Heart left ventricle (tissue), 16 donors: ENCODE measurements at regions of chr4 and their contacts with region 1.

Region 1: DNA sequence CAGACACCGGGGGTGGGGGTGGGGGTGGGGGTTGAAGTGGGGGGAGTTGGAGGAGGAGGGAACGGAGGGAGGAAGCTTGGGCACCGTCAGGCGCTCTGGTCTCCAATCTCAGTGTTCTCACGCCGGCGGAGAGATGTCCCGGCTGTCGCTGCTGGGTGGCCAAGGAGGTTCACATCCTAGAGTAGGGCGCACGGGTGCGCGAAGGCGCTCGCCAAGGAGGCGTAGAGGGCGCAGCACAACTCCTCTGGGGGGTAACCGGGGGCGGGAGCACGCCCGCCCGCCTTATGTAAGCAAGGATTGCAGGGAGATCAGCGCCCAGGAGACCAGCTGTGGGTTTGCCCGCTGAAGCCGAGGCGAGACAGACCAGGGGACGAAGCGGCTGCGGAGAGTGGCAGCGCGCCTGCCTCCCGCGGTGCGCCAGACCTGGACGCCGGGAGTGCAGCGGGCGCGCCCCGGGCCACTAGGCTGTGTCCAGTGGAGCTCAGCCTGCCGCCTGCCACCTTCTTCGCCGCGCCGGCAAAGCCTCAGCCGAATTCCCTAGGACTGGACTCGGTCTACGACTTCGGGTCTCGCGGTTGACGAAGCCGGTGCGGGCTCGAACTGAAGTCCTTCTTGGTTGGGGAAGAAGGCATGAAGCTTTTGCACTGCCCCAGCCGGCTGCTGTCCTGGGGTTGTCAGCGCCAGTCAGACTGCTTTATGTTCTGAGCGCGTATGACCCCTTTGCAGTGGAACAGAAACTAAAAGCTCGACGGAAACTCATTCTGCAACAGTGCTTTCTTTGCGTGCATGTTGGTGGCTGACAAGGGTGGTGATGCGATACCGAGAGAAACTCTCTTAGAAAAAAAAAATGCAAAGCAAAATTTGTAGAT is 707 bp upstream of the UNC5C start:
- DNase-seq: peak; percentile 59 to 80 (median 68)
- ATAC-seq: peak; percentile 50 to 79 (median 63)
- H3K4me3 ChIP-seq: peak overlapping the region; percentile 46 to 78 (median 68)
- H3K27ac ChIP-seq: peak overlapping the region; percentile 69 to 90 (median 84)
- H3K4me1 ChIP-seq: peaks cover 0 to 24% (median 0%) of the 10 kb centered on the region in 12 donors
- H3K27me3 ChIP-seq: peaks cover 3 to 49% (median 18%) of the 10 kb centered on the region in 9 donors
- CTCF ChIP-seq: no peak
- POLR2A ChIP-seq: no peak

Region 2: GRCh38 chr4:95377366-95377900 is 172.0 kb before region 1 on chr4:
- intact Hi-C with region 1: no loop called
- DNase-seq: no peak
- ATAC-seq: no peak
- H3K4me3 ChIP-seq: no peak overlapping the region
- H3K27ac ChIP-seq: no peak overlapping the region
- H3K4me1 ChIP-seq: no peaks in the 10 kb centered on the region
- H3K27me3 ChIP-seq: no peaks in the 10 kb centered on the region
- CTCF ChIP-seq: no peak
- POLR2A ChIP-seq: no peak

Region 3: DNA sequence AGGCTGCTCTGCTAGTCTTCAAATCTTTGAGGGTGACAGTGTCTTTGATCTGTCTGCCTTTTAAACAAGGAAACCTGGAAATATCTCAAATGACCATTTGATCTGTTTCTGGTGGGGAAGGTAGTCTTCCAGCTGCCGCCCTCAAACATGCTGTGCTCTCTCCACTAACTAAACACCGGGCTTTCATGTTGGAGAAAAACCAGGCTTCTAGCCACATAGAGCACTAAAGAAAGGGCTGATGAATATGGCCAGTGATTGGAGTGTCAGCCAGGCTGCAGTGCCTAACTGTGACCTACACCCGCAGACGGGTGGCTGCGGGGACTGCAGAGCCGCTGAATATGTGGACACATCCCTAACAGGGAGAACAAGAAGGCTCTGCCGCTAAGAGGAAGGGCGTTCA is 86.6 kb before region 1 on chr4:
- intact Hi-C with region 1: no loop called
- DNase-seq: no peak
- ATAC-seq: no peak
- H3K4me3 ChIP-seq: no peak overlapping the region
- H3K27ac ChIP-seq: no peak overlapping the region
- H3K4me1 ChIP-seq: no peaks in the 10 kb centered on the region
- H3K27me3 ChIP-seq: no peaks in the 10 kb centered on the region
- CTCF ChIP-seq: no peak
- POLR2A ChIP-seq: no peak

Region 4: DNA sequence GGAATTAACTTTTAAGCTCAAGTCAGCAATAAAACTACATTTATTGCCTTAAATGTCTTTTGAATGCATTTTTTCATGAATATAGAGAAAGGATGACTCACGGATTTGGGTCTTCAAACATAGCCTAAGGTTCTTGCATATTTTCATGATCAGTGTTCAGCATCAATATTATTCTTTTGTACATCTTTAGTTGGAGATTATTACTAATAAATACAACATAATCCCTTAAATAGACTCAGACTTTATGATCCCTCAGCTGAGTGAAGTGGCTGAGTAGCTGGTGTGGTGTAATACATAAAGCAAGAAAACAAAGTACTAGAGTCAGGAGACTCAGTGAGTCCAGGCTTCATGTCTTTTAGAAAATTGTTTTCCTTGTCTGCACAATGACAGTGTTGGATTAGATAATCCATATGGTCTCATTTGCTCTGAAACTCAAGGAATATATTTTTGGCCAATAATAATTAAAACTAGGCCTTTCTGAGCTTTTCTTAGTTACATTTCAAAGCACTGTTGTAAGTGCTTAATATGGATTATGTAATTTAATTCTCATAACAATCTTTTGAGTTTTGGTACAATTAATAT is 77.6 kb after region 1 on chr4:
- intact Hi-C with region 1: loop called in 1 of 10 experiments (anchors 10 kb)
- DNase-seq: no peak
- ATAC-seq: no peak
- H3K4me3 ChIP-seq: no peak overlapping the region
- H3K27ac ChIP-seq: no peak overlapping the region
- H3K4me1 ChIP-seq: peaks cover 0 to 6% (median 0%) of the 10 kb centered on the region in 12 donors
- H3K27me3 ChIP-seq: no peaks in the 10 kb centered on the region
- CTCF ChIP-seq: no peak
- POLR2A ChIP-seq: no peak